Caco-2 (cell line): ENCODE measurements at regions of chr5 and their contacts with region 1.

Region 1: GRCh38 chr5:56003179-56003578 is 8.4 kb upstream of the IL6ST start:
- DNase-seq: peak; percentile 88 to 93
- H3K4me3 ChIP-seq: no peak overlapping the region
- H3K4me3 Mint-ChIP-seq: peak overlapping the region; percentile 34
- H3K27ac Mint-ChIP-seq: peak overlapping the region; percentile 93
- H3K4me1 ChIP-seq: peaks cover 58% of the 10 kb centered on the region
- H3K4me1 Mint-ChIP-seq: peaks cover 36% of the 10 kb centered on the region
- H3K27me3 ChIP-seq: no peaks in the 10 kb centered on the region
- H3K27me3 Mint-ChIP-seq: no peaks in the 10 kb centered on the region
- CTCF ChIP-seq: no peak

Region 2: GRCh38 chr5:56059859-56060258 is 56.7 kb after region 1 on chr5:
- CTCF ChIA-PET with region 1: no interaction called
- POLR2A ChIA-PET with region 1: no interaction called
- intact Hi-C with region 1: loop called (anchors 2 kb)
- DNase-seq: peak; percentile 45 to 47
- H3K4me3 ChIP-seq: no peak overlapping the region
- H3K4me3 Mint-ChIP-seq: peak overlapping the region; percentile 0
- H3K27ac Mint-ChIP-seq: peak overlapping the region; percentile 73
- H3K4me1 ChIP-seq: peaks cover 45% of the 10 kb centered on the region
- H3K4me1 Mint-ChIP-seq: peaks cover 30% of the 10 kb centered on the region
- H3K27me3 ChIP-seq: no peaks in the 10 kb centered on the region
- H3K27me3 Mint-ChIP-seq: no peaks in the 10 kb centered on the region
- CTCF ChIP-seq: no peak

Region 3: GRCh38 chr5:56279979-56280378 is 276.8 kb after region 1 on chr5:
- CTCF ChIA-PET with region 1: no interaction called
- POLR2A ChIA-PET with region 1: no interaction called
- intact Hi-C with region 1: no loop called
- DNase-seq: peak in 1 of 2 experiments; percentile 34
- H3K4me3 ChIP-seq: no peak overlapping the region
- H3K4me3 Mint-ChIP-seq: no peak overlapping the region
- H3K27ac Mint-ChIP-seq: no peak overlapping the region
- H3K4me1 ChIP-seq: peaks cover 53% of the 10 kb centered on the region
- H3K4me1 Mint-ChIP-seq: peaks cover 18% of the 10 kb centered on the region
- H3K27me3 ChIP-seq: no peaks in the 10 kb centered on the region
- H3K27me3 Mint-ChIP-seq: no peaks in the 10 kb centered on the region
- CTCF ChIP-seq: no peak